Endothelial cell of umbilical vein (primary cell): ENCODE measurements at regions of chr13 and their contacts with region 1.

Region 1: DNA sequence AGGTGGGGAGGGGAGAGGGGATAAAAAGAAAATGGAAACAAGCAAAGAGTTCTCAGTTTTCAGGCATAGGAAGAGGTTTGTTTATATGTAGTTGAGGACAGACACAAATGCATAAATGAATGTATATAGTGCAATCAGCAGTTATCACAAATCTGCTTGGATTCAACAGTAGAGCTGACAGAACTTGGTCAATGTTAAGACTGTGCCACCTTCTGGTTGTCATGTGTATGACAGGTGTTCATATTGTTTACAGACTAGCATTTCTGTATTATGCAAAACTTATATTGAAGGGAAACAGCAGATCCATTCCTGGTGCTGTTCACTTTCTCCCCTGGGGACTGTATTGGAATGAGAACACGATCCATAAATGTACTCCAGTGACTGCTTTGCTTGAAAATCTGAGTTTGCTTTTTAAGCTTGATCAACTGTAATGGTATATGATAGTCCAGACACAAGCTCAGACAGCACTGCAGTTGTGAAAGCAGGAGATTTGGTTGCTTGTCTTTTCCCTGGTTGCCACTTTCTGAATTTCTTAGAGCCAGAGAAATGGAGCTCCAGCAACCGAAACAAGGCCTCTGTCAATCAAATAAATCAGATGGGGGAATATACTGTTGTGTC is 319.5 kb upstream of the OBI1 start:
- DNase-seq: peak; percentile 70
- H3K4me3 ChIP-seq: no peak overlapping the region
- H3K27ac ChIP-seq: no peak overlapping the region
- H3K4me1 ChIP-seq: no peaks in the 10 kb centered on the region
- H3K27me3 ChIP-seq: no peaks in the 10 kb centered on the region
- CTCF ChIP-seq: peak; percentile 43 to 59
- POLR2A ChIP-seq: no peak

Region 2: DNA sequence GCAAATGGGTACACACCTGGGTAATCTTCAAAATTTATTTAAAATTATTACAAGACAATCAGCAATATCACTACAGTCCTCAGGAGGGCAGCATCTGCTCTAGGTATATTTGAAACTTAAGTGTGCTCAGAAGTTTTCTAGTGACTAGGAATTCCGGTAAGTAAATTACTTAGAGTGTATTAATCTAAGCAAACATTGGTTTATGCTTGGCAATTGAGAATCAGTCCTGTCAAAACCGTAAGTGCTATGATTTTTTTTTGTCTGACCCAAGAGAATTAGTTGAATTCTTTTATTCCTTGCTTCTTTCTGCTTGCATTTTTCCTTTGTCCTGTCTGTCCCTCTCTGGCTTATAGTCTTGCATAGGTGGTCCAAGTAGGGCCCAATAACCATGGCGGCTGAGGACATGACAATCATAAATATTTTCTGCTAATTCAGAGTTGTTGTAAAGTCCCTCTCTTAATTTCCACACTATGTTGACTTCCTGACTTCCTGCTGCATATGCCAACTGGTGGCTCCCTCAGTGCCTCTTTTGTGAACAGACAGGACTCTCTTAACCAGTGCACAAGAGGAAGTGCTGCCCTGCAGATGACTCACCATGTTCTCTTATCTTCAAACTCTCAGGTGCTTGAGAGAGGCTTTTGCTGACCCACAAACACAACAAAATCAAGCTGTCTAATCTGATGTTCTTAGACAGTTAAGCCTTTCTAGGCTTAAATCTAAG is 1198.8 kb before region 1 on chr13:
- CTCF ChIA-PET with region 1: interaction called, 3 read pairs
- POLR2A ChIA-PET with region 1: no interaction called
- dilution Hi-C with region 1: no loop called
- intact Hi-C with region 1: loop called (anchors 10 kb)
- DNase-seq: peak; percentile 86
- H3K4me3 ChIP-seq: no peak overlapping the region
- H3K27ac ChIP-seq: peak overlapping the region; percentile 46
- H3K4me1 ChIP-seq: peaks cover 8% of the 10 kb centered on the region
- H3K27me3 ChIP-seq: no peaks in the 10 kb centered on the region
- CTCF ChIP-seq: peak; percentile 38 to 45
- POLR2A ChIP-seq: no peak

Region 3: DNA sequence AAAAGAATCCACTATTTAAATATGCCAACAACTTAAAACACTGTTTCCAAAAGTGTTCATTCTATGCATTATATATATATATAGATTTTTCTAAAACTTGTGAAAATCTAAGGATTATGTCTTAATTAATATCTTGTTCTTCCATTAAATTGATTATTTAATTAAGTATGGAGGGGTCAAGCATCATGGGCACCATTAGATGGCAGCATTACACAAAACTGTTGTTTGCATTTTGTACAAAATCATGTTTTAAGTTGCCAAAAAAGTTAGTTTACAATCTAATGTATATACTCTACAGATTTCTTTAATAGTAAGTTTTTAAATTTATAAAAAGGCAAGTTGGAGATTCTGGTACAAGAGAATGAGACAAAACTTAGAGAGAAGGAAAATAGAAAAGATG is 846.7 kb before region 1 on chr13:
- CTCF ChIA-PET with region 1: interaction called, 150 read pairs
- POLR2A ChIA-PET with region 1: no interaction called
- dilution Hi-C with region 1: no loop called
- intact Hi-C with region 1: loop called (anchors 1 kb)
- DNase-seq: peak; percentile 39
- H3K4me3 ChIP-seq: no peak overlapping the region
- H3K27ac ChIP-seq: no peak overlapping the region
- H3K4me1 ChIP-seq: no peaks in the 10 kb centered on the region
- H3K27me3 ChIP-seq: peaks cover 14% of the 10 kb centered on the region in 2 experiments
- CTCF ChIP-seq: peak; percentile 21 to 24
- POLR2A ChIP-seq: no peak

Region 4: DNA sequence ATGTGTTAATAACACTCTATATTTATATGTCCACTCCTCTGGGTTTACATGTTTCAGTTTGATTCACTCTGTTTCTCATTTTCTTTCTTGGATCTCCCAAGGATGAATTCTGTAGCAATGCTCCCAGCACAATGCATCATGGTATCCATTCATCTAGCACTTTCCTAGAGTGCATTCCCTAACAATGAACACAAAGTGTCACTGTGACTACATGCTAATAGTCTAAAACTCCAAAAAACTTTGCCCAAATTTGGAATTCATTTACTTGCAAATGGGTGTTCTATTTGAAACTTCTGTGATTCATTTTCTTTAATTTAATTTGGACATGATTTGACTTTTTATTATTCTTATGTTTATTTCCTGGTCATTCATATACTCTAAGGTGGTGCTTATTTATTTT is 661.5 kb before region 1 on chr13:
- CTCF ChIA-PET with region 1: interaction called, 16 read pairs
- POLR2A ChIA-PET with region 1: no interaction called
- dilution Hi-C with region 1: no loop called
- intact Hi-C with region 1: loop called (anchors 2 kb)
- DNase-seq: no peak
- H3K4me3 ChIP-seq: no peak overlapping the region
- H3K27ac ChIP-seq: no peak overlapping the region
- H3K4me1 ChIP-seq: peaks cover 6% of the 10 kb centered on the region
- H3K27me3 ChIP-seq: no peaks in the 10 kb centered on the region
- CTCF ChIP-seq: peak in 1 of 2 donors; percentile 16
- POLR2A ChIP-seq: no peak

Region 5: DNA sequence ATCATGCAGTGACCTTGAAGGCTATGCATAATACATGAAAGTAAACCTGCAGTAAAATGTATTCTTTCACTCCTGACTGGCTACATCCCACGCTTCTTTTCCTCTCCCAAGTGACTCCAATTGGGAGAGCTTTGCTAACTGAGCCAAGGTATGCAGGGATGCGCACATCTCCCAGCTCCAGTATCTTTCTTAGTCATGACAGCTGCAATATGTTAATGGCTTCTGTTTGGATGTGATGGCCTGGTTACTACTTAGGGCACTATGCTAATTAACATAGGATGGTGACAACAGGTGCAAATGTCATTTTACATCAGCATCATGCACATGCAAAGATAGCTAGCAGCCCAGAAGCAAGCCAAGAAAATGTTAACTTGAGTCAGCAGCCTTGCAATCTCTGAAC is 509.9 kb before region 1 on chr13:
- CTCF ChIA-PET with region 1: no interaction called
- POLR2A ChIA-PET with region 1: no interaction called
- dilution Hi-C with region 1: no loop called
- intact Hi-C with region 1: no loop called
- DNase-seq: no peak
- H3K4me3 ChIP-seq: no peak overlapping the region
- H3K27ac ChIP-seq: no peak overlapping the region
- H3K4me1 ChIP-seq: no peaks in the 10 kb centered on the region
- H3K27me3 ChIP-seq: no peaks in the 10 kb centered on the region
- CTCF ChIP-seq: no peak
- POLR2A ChIP-seq: no peak

Region 6: GRCh38 chr13:78960881-78961280 is 17.6 kb before region 1 on chr13:
- CTCF ChIA-PET with region 1: interaction called, 11 read pairs
- POLR2A ChIA-PET with region 1: no interaction called
- dilution Hi-C with region 1: no loop called
- intact Hi-C with region 1: no loop called
- DNase-seq: no peak
- H3K4me3 ChIP-seq: no peak overlapping the region
- H3K27ac ChIP-seq: no peak overlapping the region
- H3K4me1 ChIP-seq: no peaks in the 10 kb centered on the region
- H3K27me3 ChIP-seq: no peaks in the 10 kb centered on the region
- CTCF ChIP-seq: no peak
- POLR2A ChIP-seq: no peak